PC-9 (cell line): ENCODE measurements at regions of chr7 and their contacts with region 1.

Region 1: DNA sequence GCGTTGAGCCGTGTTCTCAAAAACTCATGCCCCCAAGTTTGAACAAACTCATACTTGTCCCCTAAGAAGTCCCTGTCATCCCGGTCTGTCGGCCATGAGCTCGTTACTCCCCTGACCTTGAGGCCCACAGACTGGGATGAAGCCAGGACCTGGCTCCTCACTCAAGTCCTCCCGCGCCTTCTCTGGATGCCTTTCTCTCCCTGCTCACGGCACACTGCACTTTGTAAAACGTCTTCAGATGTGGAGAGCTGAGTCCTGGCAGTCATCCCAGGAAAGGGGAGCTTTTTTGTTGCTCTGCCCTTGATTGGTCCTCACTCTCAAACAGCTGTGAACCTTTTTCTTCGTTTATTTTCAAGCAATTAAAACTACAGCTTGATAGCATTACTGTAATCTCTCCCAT is 110.8 kb downstream of the JAZF1 start:
- DNase-seq: no peak
- H3K4me3 ChIP-seq: no peak overlapping the region
- H3K27ac ChIP-seq: no peak overlapping the region
- H3K4me1 ChIP-seq: peaks cover 21% of the 10 kb centered on the region
- H3K27me3 ChIP-seq: no peaks in the 10 kb centered on the region
- CTCF ChIP-seq: no peak

Region 2: DNA sequence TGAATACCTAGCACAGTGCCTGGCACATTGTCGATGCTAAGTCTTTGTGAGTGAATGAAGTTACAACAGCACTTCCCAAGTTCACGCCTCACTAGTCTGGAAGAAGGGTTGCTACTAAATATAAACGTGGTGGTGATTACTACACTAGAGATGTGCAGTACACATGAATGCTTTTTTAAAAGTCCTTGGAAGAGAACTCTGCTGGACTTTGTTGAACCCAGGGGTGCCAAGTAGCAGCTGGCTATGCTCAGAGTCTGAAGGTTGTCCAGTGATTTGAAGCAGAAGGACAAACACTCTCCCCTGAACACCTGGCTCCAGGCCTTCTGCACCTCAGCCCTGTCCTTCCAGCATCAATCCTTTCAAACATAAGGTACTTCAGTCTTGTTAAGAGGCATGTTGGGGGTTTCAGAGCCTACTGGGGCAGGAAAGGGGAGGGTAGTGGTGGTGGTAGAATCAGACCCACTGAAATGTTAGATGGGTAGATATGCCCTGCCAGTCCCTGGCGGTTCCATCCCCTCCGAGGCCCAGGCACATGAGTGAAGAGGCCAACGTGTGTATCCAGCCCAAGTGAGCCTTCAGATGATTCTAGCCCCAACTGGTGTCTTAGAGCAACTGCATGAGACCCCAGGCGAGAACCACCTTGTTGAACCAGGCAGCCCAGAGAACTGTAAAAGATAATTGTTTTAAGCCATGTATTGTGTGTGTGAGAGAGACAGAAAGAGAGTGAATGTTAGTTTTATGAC is 235.5 kb before region 1 on chr7:
- CTCF ChIA-PET with region 1: no interaction called
- POLR2A ChIA-PET with region 1: no interaction called
- intact Hi-C with region 1: no loop called
- DNase-seq: no peak
- H3K4me3 ChIP-seq: no peak overlapping the region
- H3K27ac ChIP-seq: no peak overlapping the region
- H3K4me1 ChIP-seq: no peaks in the 10 kb centered on the region
- H3K27me3 ChIP-seq: no peaks in the 10 kb centered on the region
- CTCF ChIP-seq: no peak

Region 3: GRCh38 chr7:28052933-28053332 is 16.9 kb before region 1 on chr7:
- CTCF ChIA-PET with region 1: interaction called, 13 read pairs
- POLR2A ChIA-PET with region 1: interaction called, 3 read pairs
- intact Hi-C with region 1: no loop called
- DNase-seq: no peak
- H3K4me3 ChIP-seq: no peak overlapping the region
- H3K27ac ChIP-seq: no peak overlapping the region
- H3K4me1 ChIP-seq: no peaks in the 10 kb centered on the region
- H3K27me3 ChIP-seq: no peaks in the 10 kb centered on the region
- CTCF ChIP-seq: no peak

Region 4: DNA sequence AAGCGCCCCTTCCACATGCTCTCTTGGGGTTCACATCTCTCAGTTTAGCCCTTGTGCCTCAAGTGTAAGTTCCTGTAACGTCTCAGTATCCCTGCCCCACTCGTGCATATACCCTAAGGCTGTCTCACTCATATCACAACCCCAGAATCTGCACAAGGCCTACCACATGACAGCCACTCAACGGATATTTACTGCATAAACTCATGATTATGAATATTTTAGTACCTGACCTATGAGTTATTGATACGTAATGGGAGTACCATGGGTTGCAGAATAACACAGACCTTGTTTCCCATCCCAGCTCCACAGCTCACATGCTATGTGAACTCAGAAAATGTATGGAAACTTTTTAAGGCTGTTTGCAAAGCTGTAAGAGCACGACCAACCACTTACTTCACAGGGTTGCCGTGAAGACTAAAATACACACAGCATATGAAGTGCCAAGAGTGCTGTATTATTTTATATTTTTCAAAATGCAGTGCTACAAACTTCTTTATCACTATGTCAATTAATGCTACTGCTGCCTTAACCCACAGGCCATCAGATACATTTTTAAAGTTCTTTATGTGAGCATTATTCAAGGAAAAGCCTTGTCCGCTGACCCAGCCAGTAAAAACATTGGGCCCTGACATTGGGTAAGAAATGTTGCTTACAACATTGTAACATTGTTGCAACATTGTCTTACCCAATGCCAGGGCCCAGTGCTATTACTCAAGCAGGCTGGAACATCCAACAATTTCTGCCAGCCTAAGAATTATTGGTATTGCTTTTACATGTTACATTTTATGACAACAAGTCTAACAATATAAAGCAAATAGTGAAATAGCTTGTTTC is 13.6 kb after region 1 on chr7:
- CTCF ChIA-PET with region 1: no interaction called
- POLR2A ChIA-PET with region 1: no interaction called
- intact Hi-C with region 1: no loop called
- DNase-seq: peak in 1 of 2 experiments; percentile 43
- H3K4me3 ChIP-seq: no peak overlapping the region
- H3K27ac ChIP-seq: no peak overlapping the region
- H3K4me1 ChIP-seq: no peaks in the 10 kb centered on the region
- H3K27me3 ChIP-seq: no peaks in the 10 kb centered on the region
- CTCF ChIP-seq: no peak